ENCODE measurements at regions of chr16 and their contacts with region 1.

Region 1: GRCh38 chr16:27273670-27274423 is 5.3 kb upstream of the NSMCE1 start:
- DNase-seq: peak; percentile 83
- H3K4me3 Mint-ChIP-seq: peak overlapping the region; percentile 68
- H3K27ac Mint-ChIP-seq: peak overlapping the region; percentile 94
- H3K4me1 Mint-ChIP-seq: peaks cover 59% of the 10 kb centered on the region
- H3K27me3 Mint-ChIP-seq: no peaks in the 10 kb centered on the region

Region 2: GRCh38 chr16:27203429-27204231 is 70.2 kb before region 1 on chr16 and contains the start of gene KDM8:
- intact Hi-C with region 1: no loop called
- DNase-seq: peak; percentile 100
- H3K4me3 Mint-ChIP-seq: peak within 1 kb of the TSS; percentile 93
- H3K27ac Mint-ChIP-seq: peak within 1 kb of the TSS; percentile 100
- H3K4me1 Mint-ChIP-seq: peaks cover 52% of the 10 kb centered on the region
- H3K27me3 Mint-ChIP-seq: peaks cover 2% of the 10 kb centered on the region
- total RNA-seq, gene KDM8: 11.0 and 13.6 TPM in 2 replicates

Region 3: GRCh38 chr16:27286451-27286850 is 12.6 kb after region 1 on chr16:
- intact Hi-C with region 1: loop called (anchors 1 kb)
- DNase-seq: no peak
- H3K4me3 Mint-ChIP-seq: no peak overlapping the region
- H3K27ac Mint-ChIP-seq: peak overlapping the region; percentile 84
- H3K4me1 Mint-ChIP-seq: peaks cover 77% of the 10 kb centered on the region
- H3K27me3 Mint-ChIP-seq: no peaks in the 10 kb centered on the region

Region 4: GRCh38 chr16:27313422-27314160 is 39.7 kb after region 1 on chr16 and contains the start of gene IL4R:
- intact Hi-C with region 1: loop called (anchors 1 kb)
- DNase-seq: peak; percentile 93
- H3K4me3 Mint-ChIP-seq: peak within 1 kb of the TSS; percentile 100
- H3K27ac Mint-ChIP-seq: peak within 1 kb of the TSS; percentile 96
- H3K4me1 Mint-ChIP-seq: peaks cover 48% of the 10 kb centered on the region
- H3K27me3 Mint-ChIP-seq: no peaks in the 10 kb centered on the region
- total RNA-seq, gene IL4R: 345 and 375 TPM in 2 replicates

Region 5: GRCh38 chr16:27495191-27495590 is 221.3 kb after region 1 on chr16:
- intact Hi-C with region 1: no loop called
- DNase-seq: no peak
- H3K4me3 Mint-ChIP-seq: no peak overlapping the region
- H3K27ac Mint-ChIP-seq: no peak overlapping the region
- H3K4me1 Mint-ChIP-seq: no peaks in the 10 kb centered on the region
- H3K27me3 Mint-ChIP-seq: no peaks in the 10 kb centered on the region

Region 6: GRCh38 chr16:29107299-29107698 is 1833.5 kb after region 1 on chr16:
- intact Hi-C with region 1: no loop called
- DNase-seq: no peak
- H3K4me3 Mint-ChIP-seq: no peak overlapping the region
- H3K27ac Mint-ChIP-seq: no peak overlapping the region
- H3K4me1 Mint-ChIP-seq: peaks cover under 1% of the 10 kb centered on the region
- H3K27me3 Mint-ChIP-seq: no peaks in the 10 kb centered on the region